ENCODE measurements at regions of chr7 and their contacts with region 1.

Region 1: GRCh38 chr7:24836084-24836483 is 78.8 kb upstream of the GSDME start:
- DNase-seq: peak; percentile 89
- ATAC-seq: peak; percentile 80
- H3K4me3 ChIP-seq: peak overlapping the region in 1 of 5 experiments; percentile 46
- H3K4me3 Mint-ChIP-seq: peak overlapping the region; percentile 80
- H3K27ac ChIP-seq: peak overlapping the region; percentile 97
- H3K27ac Mint-ChIP-seq: peak overlapping the region; percentile 98
- H3K4me1 ChIP-seq: peaks cover 72 to 74% of the 10 kb centered on the region in 2 donors
- H3K4me1 Mint-ChIP-seq: peaks cover 75% of the 10 kb centered on the region
- H3K27me3 ChIP-seq: no peaks in the 10 kb centered on the region
- H3K27me3 Mint-ChIP-seq: no peaks in the 10 kb centered on the region
- CTCF ChIP-seq: no peak

Region 2: GRCh38 chr7:24757353-24758275 is 78.5 kb before region 1 on chr7 and contains the start of gene GSDME:
- CTCF ChIA-PET with region 1: no interaction called
- POLR2A ChIA-PET with region 1: interaction called, 10 read pairs
- intact Hi-C with region 1: no loop called
- DNase-seq: peak; percentile 56
- ATAC-seq: peak; percentile 86
- H3K4me3 ChIP-seq: peak within 1 kb of the TSS; percentile 26 to 84 (median 54)
- H3K4me3 Mint-ChIP-seq: peak within 1 kb of the TSS; percentile 92
- H3K27ac ChIP-seq: no peak within 1 kb of the TSS
- H3K27ac Mint-ChIP-seq: peak within 1 kb of the TSS; percentile 67
- H3K4me1 ChIP-seq: peaks cover 16 to 19% of the 10 kb centered on the region in 2 donors
- H3K4me1 Mint-ChIP-seq: peaks cover 27% of the 10 kb centered on the region
- H3K27me3 ChIP-seq: peaks cover 0 to 52% (median 31%) of the 10 kb centered on the region in 4 experiments
- H3K27me3 Mint-ChIP-seq: peaks cover 45% of the 10 kb centered on the region
- CTCF ChIP-seq: no peak
- total RNA-seq, gene GSDME: 10.6 and 11.9 TPM in 2 replicates

Region 3: DNA sequence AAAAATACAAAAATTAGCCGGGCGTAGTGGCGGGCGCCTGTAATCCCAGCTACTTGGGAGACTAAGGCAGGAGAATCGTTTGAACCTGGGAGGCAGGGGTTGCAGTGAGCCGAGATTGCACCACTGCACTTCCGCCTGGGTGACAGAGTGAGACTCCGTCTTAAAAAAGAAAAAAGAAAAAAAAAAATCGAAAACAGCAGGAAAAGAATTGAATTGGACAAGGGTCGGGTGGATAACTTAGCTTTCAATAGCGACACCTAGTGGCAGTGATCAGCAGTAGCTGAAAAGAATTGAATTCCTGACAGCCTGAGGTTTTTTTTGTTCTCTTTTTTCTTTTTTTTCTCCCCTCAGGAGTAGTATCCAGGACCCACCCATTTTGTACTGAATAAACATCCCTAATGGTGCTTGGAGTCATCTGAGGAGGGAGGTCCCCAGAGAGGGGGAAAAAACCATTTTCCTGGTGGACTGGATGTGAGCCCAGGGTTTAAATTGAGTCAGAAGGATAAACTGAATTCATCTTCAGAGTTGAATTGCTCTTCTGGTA is 233.9 kb after region 1 on chr7:
- CTCF ChIA-PET with region 1: interaction called, 12 read pairs
- POLR2A ChIA-PET with region 1: no interaction called
- intact Hi-C with region 1: no loop called
- DNase-seq: peak; percentile 76
- ATAC-seq: peak; percentile 51
- H3K4me3 ChIP-seq: no peak overlapping the region
- H3K4me3 Mint-ChIP-seq: no peak overlapping the region
- H3K27ac ChIP-seq: no peak overlapping the region
- H3K27ac Mint-ChIP-seq: no peak overlapping the region
- H3K4me1 ChIP-seq: peaks cover 0 to 2% of the 10 kb centered on the region in 2 donors
- H3K4me1 Mint-ChIP-seq: peaks cover 2% of the 10 kb centered on the region
- H3K27me3 ChIP-seq: no peaks in the 10 kb centered on the region
- H3K27me3 Mint-ChIP-seq: no peaks in the 10 kb centered on the region
- CTCF ChIP-seq: peak; percentile 95